ENCODE measurements at regions of chr7 and their contacts with region 1.

Region 1: GRCh38 chr7:95723592-95724180 is 48.7 kb upstream of the DYNC1I1 start:
- DNase-seq: peak in 1 of 3 donors; percentile 7
- ATAC-seq: no peak
- H3K4me3 ChIP-seq: no peak overlapping the region
- H3K4me1 ChIP-seq: no peaks in the 10 kb centered on the region
- CTCF ChIP-seq: no peak

Region 2: GRCh38 chr7:95871078-95871782 is 147.5 kb after region 1 on chr7:
- intact Hi-C with region 1: loop called in 1 of 2 experiments (anchors 5 kb)
- DNase-seq: peak in 1 of 3 donors; percentile 38
- ATAC-seq: no peak
- H3K4me3 ChIP-seq: no peak overlapping the region
- H3K4me1 ChIP-seq: no peaks in the 10 kb centered on the region
- CTCF ChIP-seq: no peak

Region 3: GRCh38 chr7:97006036-97006815 is 1282.5 kb after region 1 on chr7:
- intact Hi-C with region 1: no loop called
- DNase-seq: peak in 2 of 3 donors; percentile 18 to 50
- ATAC-seq: peak; percentile 77
- H3K4me3 ChIP-seq: no peak overlapping the region
- H3K4me1 ChIP-seq: peaks cover 13% of the 10 kb centered on the region
- CTCF ChIP-seq: no peak

Measured in mucosa of descending colon (tissue), 3 donors.